ENCODE measurements at regions of chr9 and their contacts with region 1.

Region 1: GRCh38 chr9:21326526-21327139 is 8.6 kb downstream of the KLHL9 start:
- ATAC-seq: peak; percentile 33 to 77 (median 54)
- H3K4me3 ChIP-seq: no peak overlapping the region
- H3K27ac ChIP-seq: no peak overlapping the region
- H3K4me1 ChIP-seq: peaks cover 6 to 17% of the 10 kb centered on the region in 2 donors

Region 2: DNA sequence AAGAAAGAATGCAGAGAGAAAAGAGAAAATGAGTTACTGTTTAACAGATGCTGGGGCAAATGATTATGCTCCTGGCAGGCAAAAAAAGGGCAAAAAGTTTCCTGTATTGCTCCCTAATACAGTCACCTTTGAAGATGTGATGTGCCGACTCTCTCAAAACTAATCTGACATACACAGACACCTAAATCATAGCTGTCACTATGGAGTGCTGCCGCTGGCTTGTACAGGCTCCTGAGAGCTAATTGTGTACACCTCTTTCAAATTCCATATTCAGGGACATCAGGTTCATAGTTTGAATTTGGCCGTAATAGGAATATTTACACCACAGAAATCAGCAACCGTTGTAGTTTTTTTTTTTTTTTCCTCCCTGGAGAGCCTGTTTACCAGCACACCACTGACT is 655.0 kb before region 1 on chr9:
- in situ Hi-C with region 1: no loop called
- ATAC-seq: no peak
- H3K4me3 ChIP-seq: no peak overlapping the region
- H3K27ac ChIP-seq: no peak overlapping the region
- H3K4me1 ChIP-seq: peaks cover 0 to 16% of the 10 kb centered on the region in 2 donors

Region 3: GRCh38 chr9:21395778-21396717 is 69.4 kb after region 1 on chr9:
- in situ Hi-C with region 1: loop called in 2 of 9 experiments (anchors 10 to 25 kb)
- ATAC-seq: peak; percentile 87 to 99 (median 98)
- H3K4me3 ChIP-seq: peak overlapping the region; percentile 36 to 71 (median 50)
- H3K27ac ChIP-seq: no peak overlapping the region
- H3K4me1 ChIP-seq: no peaks in the 10 kb centered on the region

Region 4: GRCh38 chr9:21434202-21435014 is 107.8 kb after region 1 on chr9:
- in situ Hi-C with region 1: no loop called
- ATAC-seq: peak in 2 of 8 experiments; percentile 26 to 32
- H3K4me3 ChIP-seq: no peak overlapping the region
- H3K27ac ChIP-seq: no peak overlapping the region
- H3K4me1 ChIP-seq: no peaks in the 10 kb centered on the region

Region 5: GRCh38 chr9:21455320-21455719 is 128.7 kb after region 1 on chr9:
- in situ Hi-C with region 1: loop called in 1 of 9 experiments (anchors 10 kb)
- ATAC-seq: peak in 4 of 8 experiments; percentile 50 to 96 (median 90)
- H3K4me3 ChIP-seq: no peak overlapping the region
- H3K27ac ChIP-seq: no peak overlapping the region
- H3K4me1 ChIP-seq: no peaks in the 10 kb centered on the region

Region 6: DNA sequence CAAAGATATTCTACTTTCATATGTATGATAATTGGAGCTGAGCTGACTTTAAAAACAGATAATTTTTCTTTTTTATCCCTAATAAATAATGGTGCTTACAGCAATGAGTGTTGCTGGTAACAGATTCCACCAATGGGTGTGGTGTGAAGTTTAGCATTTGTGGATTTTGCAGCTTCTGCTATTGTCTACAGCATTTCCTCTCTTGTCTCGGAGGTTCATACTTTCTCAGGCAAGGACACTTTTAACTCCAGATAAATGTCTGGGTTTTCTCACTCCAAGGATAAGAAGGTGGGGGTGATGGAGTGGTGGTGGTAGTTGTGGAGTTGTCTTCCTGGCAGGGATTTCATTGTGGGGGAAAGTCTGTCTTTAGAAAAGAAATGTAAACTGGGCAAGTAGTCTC is 802.5 kb after region 1 on chr9:
- in situ Hi-C with region 1: no loop called
- ATAC-seq: peak in 2 of 8 experiments; percentile 88 to 93
- H3K4me3 ChIP-seq: no peak overlapping the region
- H3K27ac ChIP-seq: no peak overlapping the region
- H3K4me1 ChIP-seq: no peaks in the 10 kb centered on the region

Measured in motor neuron (in vitro differentiated cells).